ENCODE measurements at regions of chrX and their contacts with region 1.

Region 1: GRCh38 chrX:23694606-23695005 is 27.3 kb downstream of the PRDX4 start:
- DNase-seq: peak; percentile 4
- H3K4me3 Mint-ChIP-seq: no peak overlapping the region
- H3K27ac Mint-ChIP-seq: no peak overlapping the region
- H3K4me1 Mint-ChIP-seq: no peaks in the 10 kb centered on the region
- H3K27me3 Mint-ChIP-seq: no peaks in the 10 kb centered on the region

Region 2: DNA sequence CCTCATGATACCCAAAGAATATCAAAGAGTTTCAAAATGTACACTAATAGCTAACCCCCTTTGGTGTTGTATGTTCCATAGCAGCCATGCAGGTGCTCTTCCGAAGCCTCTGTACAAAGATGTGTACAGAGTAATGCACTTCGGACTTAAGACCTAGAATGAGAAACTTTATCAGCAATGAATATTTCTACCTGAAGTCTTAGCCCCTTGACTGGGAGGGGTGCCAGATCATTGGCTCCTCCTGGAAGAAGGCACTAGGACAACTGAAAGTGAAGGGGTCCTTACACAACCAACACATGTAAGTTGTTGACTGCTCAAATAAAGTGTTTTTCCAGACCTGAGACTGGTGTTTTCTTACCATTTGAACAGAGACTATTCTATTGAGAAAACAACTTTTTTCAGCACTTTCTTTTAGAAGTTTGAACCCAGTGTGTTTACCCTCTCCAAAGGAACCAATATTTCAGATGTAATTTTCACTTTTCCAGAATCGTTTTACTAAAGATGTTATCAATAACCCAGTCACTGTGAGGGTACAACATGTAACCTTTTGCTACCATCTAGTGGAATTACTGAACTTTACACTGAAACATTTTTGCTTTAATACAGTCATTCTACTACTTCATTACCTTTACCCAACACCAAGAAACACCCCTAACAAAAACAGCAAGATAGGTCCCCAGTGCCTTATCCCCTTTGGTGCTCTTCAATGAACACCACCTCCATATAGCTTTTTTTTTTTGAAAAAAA is 60.6 kb before region 1 on chrX:
- intact Hi-C with region 1: loop called (anchors 10 kb)
- DNase-seq: no peak
- H3K4me3 Mint-ChIP-seq: no peak overlapping the region
- H3K27ac Mint-ChIP-seq: no peak overlapping the region
- H3K4me1 Mint-ChIP-seq: no peaks in the 10 kb centered on the region
- H3K27me3 Mint-ChIP-seq: peaks cover 7% of the 10 kb centered on the region